ENCODE measurements at regions of chr14 and their contacts with region 1.

Region 1: GRCh38 chr14:75307700-75308379 is 29.2 kb downstream of the FOS start:
- DNase-seq: peak; percentile 93
- H3K4me3 ChIP-seq: no peak overlapping the region
- H3K27ac ChIP-seq: no peak overlapping the region
- H3K4me1 ChIP-seq: peaks cover 0 to 26% (median 19%) of the 10 kb centered on the region in 4 donors
- H3K27me3 ChIP-seq: no peaks in the 10 kb centered on the region
- CTCF ChIP-seq: peak; percentile 73 to 93 (median 78)
- EP300 ChIP-seq: no peak
- POLR2A ChIP-seq: no peak

Region 2: DNA sequence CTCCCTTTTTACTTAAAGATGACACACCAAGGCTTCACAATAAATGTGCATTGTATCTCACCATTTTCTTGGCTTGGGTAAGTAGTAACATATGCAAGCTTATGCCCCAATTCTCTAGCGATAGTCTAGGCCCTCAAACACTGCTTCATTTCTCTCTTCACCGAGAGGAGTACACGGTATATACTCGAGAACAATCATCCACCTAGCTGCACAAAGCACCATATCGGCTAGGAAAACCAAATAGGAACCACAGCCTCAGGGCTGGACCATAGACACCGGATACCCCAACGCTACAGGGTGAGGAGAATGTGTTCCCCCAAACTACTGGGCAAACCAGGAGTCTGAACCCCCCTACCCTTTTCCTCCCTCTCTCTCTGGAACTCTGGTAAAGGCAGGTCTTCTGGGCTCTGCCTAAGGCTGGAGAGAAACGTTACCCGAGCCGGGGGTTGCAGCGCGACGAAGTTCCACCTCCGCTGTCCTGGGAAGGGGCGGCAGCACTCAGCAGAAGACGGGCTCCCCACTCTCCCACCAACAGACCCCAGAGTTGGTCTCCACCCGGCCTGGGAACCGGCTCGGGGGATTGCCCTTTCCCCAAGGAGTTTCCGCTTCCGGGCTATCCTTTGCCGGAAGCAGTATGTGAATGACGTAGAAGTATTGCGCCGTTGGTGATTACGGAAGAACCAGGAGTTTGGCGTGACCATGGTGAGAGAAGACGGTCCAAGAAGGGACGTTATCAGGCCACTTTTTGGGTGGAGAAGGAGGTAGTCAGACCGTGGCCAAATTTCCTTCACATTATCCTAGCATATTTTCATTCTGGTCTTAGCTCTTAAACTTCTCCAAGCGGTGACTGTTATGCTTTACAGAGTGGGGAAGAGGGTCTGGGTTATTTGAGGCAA is 595.1 kb before region 1 on chr14 and contains the starts of genes AREL1 and FCF1:
- intact Hi-C with region 1: no loop called
- DNase-seq: peak; percentile 91
- H3K4me3 ChIP-seq: peak within 1 kb of the TSS; percentile 66 to 81 (median 80)
- H3K27ac ChIP-seq: peak within 1 kb of the TSS; percentile 84 to 89 (median 84)
- H3K4me1 ChIP-seq: peaks cover 0 to 48% (median 34%) of the 10 kb centered on the region in 4 donors
- H3K27me3 ChIP-seq: no peaks in the 10 kb centered on the region
- CTCF ChIP-seq: no peak
- EP300 ChIP-seq: peak in 1 of 4 donors; percentile 10
- POLR2A ChIP-seq: peak; percentile 65 to 74
- total RNA-seq, gene AREL1: 11.7 to 16.6 (median 14.3) TPM
- total RNA-seq, gene FCF1: 18.6 to 35.7 (median 28.3) TPM

Region 3: GRCh38 chr14:74945823-74946682 is 361.8 kb before region 1 on chr14:
- intact Hi-C with region 1: loop called (anchors 10 kb)
- DNase-seq: peak; percentile 88
- H3K4me3 ChIP-seq: peak overlapping the region in 1 of 4 donors; percentile 12
- H3K27ac ChIP-seq: peak overlapping the region in 2 of 4 donors; percentile 10 to 12
- H3K4me1 ChIP-seq: peaks cover 0 to 27% (median 23%) of the 10 kb centered on the region in 4 donors
- H3K27me3 ChIP-seq: peaks cover 0 to 25% (median 6%) of the 10 kb centered on the region in 3 donors
- CTCF ChIP-seq: peak; percentile 82 to 95 (median 92)
- EP300 ChIP-seq: no peak
- POLR2A ChIP-seq: no peak

Region 4: DNA sequence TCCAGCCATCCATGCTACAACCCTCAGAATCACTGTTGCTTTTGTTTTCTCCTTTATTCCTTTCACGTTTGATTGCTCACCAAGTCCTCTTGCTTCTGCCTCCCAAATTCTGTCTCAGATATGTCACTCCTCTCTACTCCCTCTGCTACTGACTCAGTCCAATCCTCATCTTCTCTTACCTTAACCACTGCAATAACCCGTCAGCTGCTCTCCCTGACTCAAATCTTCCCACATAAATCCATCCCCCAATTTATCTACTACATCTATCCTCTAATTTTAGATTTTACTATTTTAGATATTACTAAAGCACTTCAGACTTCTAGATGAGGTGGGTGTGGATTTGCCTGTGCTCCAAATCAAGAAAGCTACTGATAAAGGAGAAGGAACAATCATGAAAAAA is 282.0 kb before region 1 on chr14:
- intact Hi-C with region 1: no loop called
- DNase-seq: no peak
- H3K4me3 ChIP-seq: no peak overlapping the region
- H3K27ac ChIP-seq: no peak overlapping the region
- H3K4me1 ChIP-seq: no peaks in the 10 kb centered on the region
- H3K27me3 ChIP-seq: no peaks in the 10 kb centered on the region
- CTCF ChIP-seq: no peak
- EP300 ChIP-seq: no peak
- POLR2A ChIP-seq: no peak

Region 5: DNA sequence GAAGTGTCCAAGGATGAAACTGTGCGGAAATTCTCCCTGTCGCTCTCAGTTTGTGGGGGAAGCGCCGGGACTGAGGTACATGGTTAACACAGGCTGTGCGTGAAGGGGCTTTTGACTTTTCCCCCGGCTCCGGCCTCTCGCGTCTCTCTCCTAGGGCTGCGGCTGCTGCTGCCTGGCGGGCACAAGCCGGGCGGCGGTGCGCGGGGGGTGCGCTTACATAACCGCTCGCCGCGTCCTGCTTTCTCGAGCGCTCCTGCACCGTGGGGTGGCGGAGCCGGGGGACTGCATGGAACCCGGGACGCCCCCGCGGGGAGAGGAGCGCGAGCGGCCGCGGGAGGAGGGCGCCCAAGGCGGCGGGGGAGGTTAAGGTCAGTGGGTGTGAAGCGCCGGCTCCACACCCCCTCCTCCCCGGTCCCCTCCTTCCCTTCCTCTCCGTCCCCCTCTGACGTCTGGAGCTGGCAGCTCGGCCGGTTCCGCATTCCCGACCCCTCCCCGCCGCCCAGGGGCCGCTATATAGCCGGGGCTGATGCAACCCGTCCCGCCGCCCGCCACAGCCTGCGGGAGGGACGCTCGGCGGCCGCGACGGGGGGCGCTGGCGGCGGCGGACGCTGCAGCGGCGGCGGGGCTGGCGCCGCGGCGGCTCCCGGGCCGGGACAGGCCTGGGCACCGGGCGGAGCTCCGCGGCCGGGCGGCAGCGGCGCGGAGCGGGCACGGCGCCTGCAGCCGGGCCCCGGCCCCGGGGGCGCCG is 119.8 kb after region 1 on chr14 and contains the start of gene JDP2:
- intact Hi-C with region 1: loop called (anchors 2 kb)
- DNase-seq: peak; percentile 98
- H3K4me3 ChIP-seq: peak within 1 kb of the TSS; percentile 71 to 78 (median 76)
- H3K27ac ChIP-seq: peak within 1 kb of the TSS; percentile 90 to 96 (median 94)
- H3K4me1 ChIP-seq: peaks cover 0 to 53% (median 44%) of the 10 kb centered on the region in 4 donors
- H3K27me3 ChIP-seq: no peaks in the 10 kb centered on the region
- CTCF ChIP-seq: peak in 1 of 4 experiments; percentile 16
- EP300 ChIP-seq: peak in 3 of 4 donors; percentile 30 to 65 (median 59)
- POLR2A ChIP-seq: peak; percentile 47 to 64
- total RNA-seq, gene JDP2: 54.9 to 90.0 (median 58.0) TPM

Region 6: DNA sequence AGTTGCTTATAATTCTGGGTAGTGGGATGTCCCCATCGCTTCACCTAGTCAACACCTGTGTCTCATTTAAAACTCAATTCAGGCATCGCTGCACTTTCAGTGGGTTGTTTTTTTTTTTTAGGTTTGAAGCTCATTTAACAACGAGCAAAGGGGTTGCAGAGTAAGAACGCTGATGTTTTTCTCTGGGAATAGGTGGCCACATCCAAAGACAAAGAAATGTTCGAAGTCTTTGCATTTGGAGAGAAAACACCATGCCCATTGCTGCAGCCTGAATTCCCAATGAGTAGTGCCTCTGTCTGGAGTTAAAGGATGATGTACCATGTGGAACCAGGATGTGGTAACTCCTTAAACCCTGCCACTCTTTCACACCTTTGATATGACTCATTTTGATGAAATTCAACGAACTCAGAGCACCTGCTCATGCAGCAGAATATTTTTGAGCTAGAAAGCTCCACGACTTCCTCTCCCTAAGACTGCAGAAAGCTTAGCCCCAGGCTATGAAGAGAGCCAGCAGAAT is 179.4 kb after region 1 on chr14:
- intact Hi-C with region 1: loop called (anchors 1 kb)
- DNase-seq: no peak
- H3K4me3 ChIP-seq: no peak overlapping the region
- H3K27ac ChIP-seq: no peak overlapping the region
- H3K4me1 ChIP-seq: no peaks in the 10 kb centered on the region
- H3K27me3 ChIP-seq: no peaks in the 10 kb centered on the region
- CTCF ChIP-seq: no peak
- EP300 ChIP-seq: no peak
- POLR2A ChIP-seq: no peak

Region 7: GRCh38 chr14:75654127-75654732 is 346.4 kb after region 1 on chr14:
- intact Hi-C with region 1: loop called (anchors 10 kb)
- DNase-seq: peak; percentile 85
- H3K4me3 ChIP-seq: no peak overlapping the region
- H3K27ac ChIP-seq: no peak overlapping the region
- H3K4me1 ChIP-seq: peaks cover 0 to 4% (median 0%) of the 10 kb centered on the region in 4 donors
- H3K27me3 ChIP-seq: no peaks in the 10 kb centered on the region
- CTCF ChIP-seq: peak; percentile 79 to 95 (median 92)
- EP300 ChIP-seq: no peak
- POLR2A ChIP-seq: no peak